ENCODE measurements at regions of chr1 and their contacts with region 1.

Region 1: DNA sequence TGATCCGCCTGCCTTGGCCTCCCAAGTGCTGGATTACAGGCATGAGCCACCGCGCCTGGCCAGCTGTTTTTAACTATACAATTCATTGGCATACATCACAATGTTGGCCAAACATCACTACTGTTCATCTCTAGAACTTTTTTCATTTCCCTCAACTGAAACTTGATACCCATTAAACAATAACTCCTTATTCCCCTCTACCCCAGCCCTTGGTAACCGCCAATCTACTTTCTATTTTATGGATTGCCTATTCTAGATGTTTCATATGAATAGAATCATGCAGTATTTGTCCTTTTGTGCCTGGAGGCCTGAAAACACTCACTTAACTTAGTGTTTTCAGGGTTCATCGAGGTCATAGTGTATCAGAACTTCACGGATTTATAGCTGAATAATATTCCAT is 16.2 kb downstream of the BTF3L4 start:
- DNase-seq: no peak

Region 2: DNA sequence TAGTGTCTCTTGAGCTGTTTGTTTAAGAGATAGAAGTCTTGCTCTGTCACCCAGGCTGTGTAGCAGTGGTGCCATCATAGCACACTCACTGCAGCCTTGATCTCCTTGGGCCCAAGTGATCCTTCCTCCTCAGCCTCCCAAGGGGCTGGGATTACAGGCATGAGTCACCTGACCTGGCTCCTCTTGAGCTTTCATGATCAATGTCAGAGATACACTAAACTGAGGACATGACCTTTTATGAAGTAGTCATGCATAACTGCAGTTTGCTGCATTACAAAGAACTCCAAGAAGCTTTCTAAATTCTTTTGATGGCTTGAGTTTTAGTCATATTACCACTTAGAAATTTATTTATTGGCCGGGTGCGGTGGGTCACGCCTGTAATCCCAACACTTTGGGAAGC is 216.0 kb after region 1 on chr1:
- intact Hi-C with region 1: no loop called
- DNase-seq: no peak

Region 3: DNA sequence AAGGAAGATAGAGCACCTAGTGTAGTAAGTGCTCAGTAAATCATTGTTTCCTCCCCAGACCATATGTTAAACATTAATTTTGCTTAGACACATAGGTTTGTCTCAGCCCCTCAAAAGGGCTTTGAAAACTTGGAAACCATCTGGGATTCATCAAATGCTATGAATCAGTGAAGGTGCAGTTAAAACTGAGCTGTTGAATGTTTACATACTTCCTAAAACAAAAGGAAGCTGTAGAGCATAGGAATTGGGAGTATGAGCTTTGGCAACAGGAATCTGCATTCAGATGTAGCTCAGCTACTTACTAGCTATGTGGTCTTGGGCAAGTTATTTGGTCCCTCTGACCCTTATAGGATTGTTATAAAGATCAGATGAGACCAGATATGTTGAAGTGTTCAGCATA is 971.0 kb after region 1 on chr1:
- intact Hi-C with region 1: loop called in 1 of 2 experiments (anchors 5 kb)
- DNase-seq: no peak